ENCODE measurements at regions of chr2 and their contacts with region 1.

Region 1: DNA sequence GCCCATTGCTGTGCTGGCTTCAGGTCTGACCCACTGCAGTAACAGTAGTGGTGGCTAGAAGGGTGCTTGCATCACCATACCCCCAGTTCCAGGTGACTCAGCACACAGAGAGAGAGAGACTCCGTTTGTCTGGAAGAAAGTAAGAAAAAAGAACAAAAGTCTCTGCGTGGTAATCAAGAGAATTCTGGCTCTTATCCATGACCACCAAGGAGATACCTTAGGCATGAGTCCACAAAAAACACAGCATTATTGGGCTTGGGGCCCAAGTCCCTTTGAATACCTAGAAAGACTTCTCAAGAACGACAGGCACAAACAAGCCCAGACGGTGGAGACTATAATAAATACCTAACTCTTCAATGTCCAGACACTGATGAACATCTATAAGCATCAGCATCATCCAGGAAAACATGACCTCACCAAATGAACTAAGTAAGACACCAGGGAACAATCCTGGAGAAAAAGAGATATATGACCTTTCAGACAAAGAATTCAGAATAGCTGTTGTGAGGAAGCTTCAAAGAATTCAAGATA is 21.7 kb upstream of the BAZ2B start:
- DNase-seq: no peak
- ATAC-seq: no peak
- H3K4me3 ChIP-seq: no peak overlapping the region
- H3K27ac ChIP-seq: no peak overlapping the region
- H3K4me1 ChIP-seq: peaks cover 0 to 15% (median 0%) of the 10 kb centered on the region in 12 donors
- H3K27me3 ChIP-seq: no peaks in the 10 kb centered on the region
- CTCF ChIP-seq: no peak
- POLR2A ChIP-seq: no peak

Region 2: DNA sequence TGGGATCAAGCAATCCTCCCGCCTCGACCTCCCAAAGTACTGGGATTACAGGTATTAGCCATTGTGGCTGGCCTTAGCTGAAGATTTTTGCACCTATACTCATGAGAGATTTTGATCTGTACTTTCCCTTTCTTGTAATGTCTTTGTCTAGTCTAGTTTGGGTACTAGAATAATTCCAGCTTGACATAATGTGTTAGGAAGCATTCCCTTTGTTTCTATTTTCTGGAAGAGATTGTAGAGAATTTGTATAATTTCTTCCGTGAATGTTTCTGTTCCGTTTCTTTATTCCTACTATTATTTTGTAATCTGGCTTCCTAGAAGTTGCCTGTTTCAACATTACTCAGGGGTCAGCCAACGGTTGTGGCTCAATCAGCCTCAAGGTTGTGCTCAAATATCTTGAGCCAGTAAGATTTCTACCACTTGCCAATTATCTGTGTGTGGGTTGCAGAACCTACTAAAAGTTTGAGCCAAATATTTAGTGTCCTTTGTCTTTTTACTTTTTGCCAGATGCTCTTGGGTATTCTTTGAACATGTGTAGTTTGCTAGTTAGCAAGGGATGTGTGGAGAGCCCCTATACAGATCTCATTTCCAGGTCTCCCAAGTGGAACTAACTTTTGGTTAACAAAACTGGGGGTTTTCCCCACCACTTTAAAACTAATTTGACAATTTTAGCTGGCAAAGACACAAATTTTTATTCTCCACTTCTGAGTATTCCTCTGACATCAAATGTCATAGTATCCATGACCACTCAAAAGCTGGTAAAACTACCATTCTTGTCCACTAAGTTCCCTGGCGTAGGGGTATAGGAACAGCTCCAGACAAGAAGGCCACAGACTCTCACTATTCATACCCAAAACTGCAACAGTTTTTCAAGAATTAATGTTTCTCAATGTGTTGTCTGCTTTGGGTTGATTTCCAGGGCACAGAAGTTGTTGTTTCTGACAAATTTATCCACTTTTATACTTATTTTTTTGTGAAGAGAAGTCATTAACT is 21.1 kb after region 1 on chr2:
- intact Hi-C with region 1: loop called in 2 of 10 experiments (anchors 1 to 2 kb)
- DNase-seq: peak in 1 of 5 donors; percentile 27
- ATAC-seq: peak in 3 of 4 donors; percentile 36 to 66 (median 53)
- H3K4me3 ChIP-seq: no peak overlapping the region
- H3K27ac ChIP-seq: peak overlapping the region in 1 of 12 donors; percentile 70
- H3K4me1 ChIP-seq: peaks cover 0 to 8% (median 0%) of the 10 kb centered on the region in 12 donors
- H3K27me3 ChIP-seq: no peaks in the 10 kb centered on the region
- CTCF ChIP-seq: no peak
- POLR2A ChIP-seq: no peak

Region 3: DNA sequence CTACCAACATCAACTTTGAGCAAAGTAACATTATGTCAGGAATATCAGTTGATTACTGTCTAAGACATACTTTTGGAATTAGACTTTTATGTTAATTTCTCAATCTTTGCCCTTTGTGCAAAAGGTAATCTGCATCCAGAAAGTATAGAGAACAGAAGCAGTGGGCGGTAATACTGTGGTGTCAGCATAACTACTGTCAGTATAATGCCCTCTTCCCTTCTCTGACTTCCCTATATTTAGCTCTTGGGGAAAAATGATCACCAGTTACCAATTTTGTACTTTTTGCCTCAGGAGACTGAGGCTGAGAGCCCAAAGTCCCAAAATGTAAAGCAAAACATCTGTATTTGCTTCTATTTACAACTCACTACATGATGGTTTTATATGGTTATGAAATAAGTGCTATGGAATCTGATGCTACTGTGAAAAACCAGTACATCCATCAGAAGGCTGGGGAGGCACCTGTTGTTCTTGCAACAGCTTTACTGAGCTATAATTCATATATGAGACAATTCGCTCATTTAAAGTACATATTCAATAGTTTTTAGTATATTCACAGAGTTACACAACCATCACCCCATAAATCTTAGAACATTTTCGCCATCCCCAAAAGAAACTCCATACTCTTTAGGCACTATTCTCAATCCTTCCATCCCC is 211.3 kb after region 1 on chr2:
- intact Hi-C with region 1: no loop called
- DNase-seq: no peak
- ATAC-seq: no peak
- H3K4me3 ChIP-seq: no peak overlapping the region
- H3K27ac ChIP-seq: no peak overlapping the region
- H3K4me1 ChIP-seq: peaks cover 0 to 4% (median 0%) of the 10 kb centered on the region in 12 donors
- H3K27me3 ChIP-seq: no peaks in the 10 kb centered on the region
- CTCF ChIP-seq: no peak
- POLR2A ChIP-seq: no peak

Region 4: GRCh38 chr2:160109936-160110673 is 472.1 kb after region 1 on chr2:
- intact Hi-C with region 1: no loop called
- DNase-seq: peak; percentile 55 to 71 (median 62)
- ATAC-seq: peak; percentile 73 to 94 (median 86)
- H3K4me3 ChIP-seq: no peak overlapping the region
- H3K27ac ChIP-seq: no peak overlapping the region
- H3K4me1 ChIP-seq: no peaks in the 10 kb centered on the region
- H3K27me3 ChIP-seq: no peaks in the 10 kb centered on the region
- CTCF ChIP-seq: peak; percentile 54 to 90 (median 80)
- POLR2A ChIP-seq: no peak

Measured in heart left ventricle (tissue), 16 donors.